ENCODE measurements at regions of chr10 and their contacts with region 1.

Region 1: DNA sequence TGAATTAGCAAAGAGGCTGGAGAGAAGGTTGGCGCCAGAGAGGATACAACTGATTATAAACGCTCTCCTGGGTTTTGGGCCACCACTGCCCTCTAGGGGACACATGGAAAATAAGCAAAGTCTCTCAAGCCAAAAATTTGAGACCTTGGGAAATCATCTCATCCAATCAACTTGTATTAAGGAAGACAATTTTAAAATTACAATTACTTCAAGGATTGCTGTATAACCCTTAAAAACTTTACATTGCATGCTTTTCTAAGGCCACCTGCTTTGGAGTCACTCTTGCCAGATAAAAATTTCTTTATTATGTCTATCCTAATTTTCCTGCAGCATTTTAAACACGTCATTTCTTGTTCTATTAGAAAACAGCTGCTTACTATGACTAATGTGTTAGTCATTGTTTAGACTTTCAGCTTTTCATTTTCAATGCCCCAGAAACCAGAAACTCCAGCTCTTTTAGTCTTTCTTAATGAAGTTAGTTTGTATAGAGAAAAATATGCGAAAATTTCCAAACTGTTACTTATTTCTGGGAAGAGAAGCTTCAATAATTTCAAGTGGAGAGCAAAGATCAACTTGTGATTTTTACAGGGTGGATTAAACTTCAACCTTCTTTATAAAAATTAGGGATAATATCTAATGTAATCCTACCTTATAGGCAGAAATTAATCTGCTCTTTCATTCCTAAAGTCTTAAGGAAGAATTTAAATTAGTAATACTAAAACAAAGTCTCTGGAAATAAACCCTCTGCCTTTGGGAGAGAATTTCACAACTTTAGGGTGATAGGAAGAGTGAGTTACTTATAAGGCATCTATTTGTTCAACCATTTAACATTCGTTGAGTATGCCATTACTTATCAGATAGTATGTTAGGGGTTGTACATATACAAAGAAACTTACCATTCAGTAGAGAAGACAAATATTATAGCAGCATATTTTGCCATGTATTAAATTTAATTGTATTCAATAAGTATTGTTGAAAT is 20.6 kb upstream of the RHOBTB1 start:
- DNase-seq: peak; percentile 40 to 81 (median 68)
- H3K4me3 ChIP-seq: peak overlapping the region in 28 of 59 donors; percentile 1 to 51 (median 18)
- H3K27ac ChIP-seq: peak overlapping the region in 58 of 59 donors; percentile 18 to 91 (median 79)
- H3K27me3 ChIP-seq: no peaks in the 10 kb centered on the region
- CTCF ChIP-seq: peak; percentile 67 to 98 (median 90)

Region 2: GRCh38 chr10:60444494-60445064 is 520.0 kb before region 1 on chr10:
- intact Hi-C with region 1: no loop called
- DNase-seq: no peak
- H3K4me3 ChIP-seq: no peak overlapping the region
- H3K27ac ChIP-seq: peak overlapping the region in 29 of 59 donors; percentile 1 to 85 (median 68)
- H3K27me3 ChIP-seq: no peaks in the 10 kb centered on the region
- CTCF ChIP-seq: peak; percentile 45 to 98 (median 76)

Region 3: DNA sequence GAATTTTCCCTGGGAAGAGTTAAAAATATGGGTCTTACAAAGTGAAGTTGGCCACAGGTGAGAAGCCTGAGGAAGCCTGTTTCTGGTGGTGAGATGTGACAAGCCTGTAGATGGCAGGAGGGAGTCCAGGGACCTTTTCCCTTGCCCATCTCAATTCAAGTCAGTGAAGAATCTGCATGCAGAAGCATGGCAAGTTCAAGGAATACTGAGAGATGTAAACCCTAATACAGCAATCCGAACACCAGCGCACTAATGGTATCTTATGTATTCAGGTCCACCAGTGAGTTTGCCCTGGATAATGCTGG is 94.2 kb before region 1 on chr10:
- intact Hi-C with region 1: loop called in 1 of 2 experiments (anchors 5 kb)
- DNase-seq: no peak
- H3K4me3 ChIP-seq: no peak overlapping the region
- H3K27ac ChIP-seq: peak overlapping the region in 14 of 59 donors; percentile 1 to 42 (median 8)
- H3K27me3 ChIP-seq: no peaks in the 10 kb centered on the region
- CTCF ChIP-seq: peak in 35 of 56 donors; percentile 8 to 59 (median 32)

Region 4: GRCh38 chr10:61135276-61135721 is 170.8 kb after region 1 on chr10:
- intact Hi-C with region 1: loop called in 1 of 2 experiments (anchors 10 kb)
- DNase-seq: no peak
- H3K4me3 ChIP-seq: no peak overlapping the region
- H3K27ac ChIP-seq: no peak overlapping the region
- H3K27me3 ChIP-seq: no peaks in the 10 kb centered on the region
- CTCF ChIP-seq: no peak

Region 5: DNA sequence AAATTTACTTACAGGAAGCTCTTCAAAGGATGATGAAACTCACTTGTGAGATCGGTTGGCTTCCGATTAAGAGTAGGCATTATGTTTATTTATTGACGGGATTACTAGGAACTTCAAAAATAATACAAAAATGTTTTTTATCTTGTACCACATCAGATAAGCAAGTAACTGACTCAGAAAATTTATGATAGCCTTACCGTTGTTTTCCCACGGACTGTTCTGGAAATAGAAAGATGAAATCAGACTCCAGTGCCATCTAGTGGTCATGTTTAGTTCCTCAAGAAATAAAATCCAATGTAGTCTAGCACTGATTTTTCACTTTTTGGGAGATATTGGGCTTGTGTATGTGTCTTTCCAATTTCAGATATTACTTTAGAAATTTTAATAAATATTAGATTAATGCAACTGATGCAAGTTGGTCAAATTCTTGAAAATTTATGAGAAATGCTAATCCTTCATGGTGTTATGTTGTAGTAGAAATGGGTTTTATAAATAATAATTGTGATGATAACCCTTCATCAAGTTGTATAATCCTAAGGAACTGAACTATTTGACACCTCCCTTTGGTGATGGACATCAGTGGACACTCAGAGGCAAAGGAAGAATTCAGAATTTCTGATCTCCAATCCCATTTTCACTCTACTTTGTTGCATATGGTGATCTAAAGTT is 319.8 kb after region 1 on chr10:
- intact Hi-C with region 1: loop called in 1 of 2 experiments (anchors 10 kb)
- DNase-seq: no peak
- H3K4me3 ChIP-seq: no peak overlapping the region
- H3K27ac ChIP-seq: peak overlapping the region in 15 of 59 donors; percentile 2 to 67 (median 22)
- H3K27me3 ChIP-seq: no peaks in the 10 kb centered on the region
- CTCF ChIP-seq: peak; percentile 67 to 96 (median 85)